Astrocyte of the cerebellum (primary cell): ENCODE measurements at regions of chr15 and their contacts with region 1.

Region 1: DNA sequence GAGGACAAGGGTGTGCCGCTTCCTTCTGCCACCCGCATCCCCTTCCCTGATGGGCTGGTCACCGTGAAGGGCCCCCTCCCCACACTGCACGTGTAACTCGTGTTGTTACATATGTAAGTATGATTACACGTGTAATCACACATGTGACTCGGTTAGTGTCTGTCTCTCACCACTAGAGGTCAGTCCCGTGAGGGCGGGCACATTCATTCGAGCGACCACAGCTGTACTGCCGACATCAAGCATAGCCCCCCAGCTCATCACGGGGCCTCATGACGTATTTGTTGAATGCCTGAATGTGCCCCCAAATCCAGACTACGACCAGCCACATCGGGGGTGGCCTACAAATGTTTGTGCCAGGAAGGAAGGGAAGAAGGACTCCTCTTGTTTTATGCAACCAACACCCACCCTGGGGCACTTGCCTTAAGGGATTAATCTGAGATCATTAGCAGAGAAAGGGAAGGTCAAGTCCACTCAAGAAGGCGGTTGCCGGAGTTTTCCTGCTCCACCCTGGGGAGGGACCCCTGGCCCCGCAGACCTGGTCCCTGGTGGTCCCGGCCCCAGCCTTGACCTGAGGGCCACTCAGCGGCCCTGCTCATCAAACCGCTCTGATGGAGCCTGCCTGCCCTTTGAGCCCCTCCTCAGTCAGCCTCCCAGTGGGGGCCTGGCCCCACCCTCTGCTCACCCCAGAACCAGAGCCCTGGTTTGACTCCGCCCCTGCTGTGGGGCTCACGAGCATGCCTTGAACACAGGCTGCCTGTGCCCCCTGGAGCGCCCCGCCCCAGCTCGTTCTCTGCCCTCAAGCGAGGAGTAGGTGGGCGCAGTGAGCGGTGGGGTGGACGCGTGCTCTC is 52.8 kb downstream of the RGMA start:
- DNase-seq: no peak
- H3K4me3 ChIP-seq: no peak overlapping the region
- CTCF ChIP-seq: peak; percentile 61

Region 2: GRCh38 chr15:92989470-92989869 is 46.7 kb before region 1 on chr15:
- in situ Hi-C with region 1: no loop called
- DNase-seq: no peak
- H3K4me3 ChIP-seq: no peak overlapping the region
- CTCF ChIP-seq: no peak

Region 3: DNA sequence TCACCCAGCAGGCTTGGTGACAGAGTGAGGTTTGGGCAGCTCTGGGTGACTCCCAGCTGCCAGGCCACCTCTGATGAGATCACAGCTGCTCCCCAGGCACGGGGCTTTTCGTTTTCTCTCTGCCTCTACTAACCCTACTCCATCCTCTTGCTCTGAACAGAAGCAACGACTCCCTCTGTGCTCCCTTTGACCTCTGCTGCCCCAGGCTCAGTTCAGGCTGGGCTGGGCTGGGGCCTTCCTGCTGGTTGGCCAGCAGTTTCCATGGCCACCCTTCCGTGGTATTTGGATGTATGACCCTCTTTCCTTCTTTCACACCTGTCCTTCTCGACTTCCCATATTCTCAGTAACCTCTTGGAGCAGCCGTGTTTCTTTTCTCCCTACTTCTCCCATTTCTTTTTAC is 44.3 kb after region 1 on chr15:
- in situ Hi-C with region 1: loop called (anchors 5 kb)
- DNase-seq: no peak
- H3K4me3 ChIP-seq: no peak overlapping the region
- CTCF ChIP-seq: no peak

Region 4: DNA sequence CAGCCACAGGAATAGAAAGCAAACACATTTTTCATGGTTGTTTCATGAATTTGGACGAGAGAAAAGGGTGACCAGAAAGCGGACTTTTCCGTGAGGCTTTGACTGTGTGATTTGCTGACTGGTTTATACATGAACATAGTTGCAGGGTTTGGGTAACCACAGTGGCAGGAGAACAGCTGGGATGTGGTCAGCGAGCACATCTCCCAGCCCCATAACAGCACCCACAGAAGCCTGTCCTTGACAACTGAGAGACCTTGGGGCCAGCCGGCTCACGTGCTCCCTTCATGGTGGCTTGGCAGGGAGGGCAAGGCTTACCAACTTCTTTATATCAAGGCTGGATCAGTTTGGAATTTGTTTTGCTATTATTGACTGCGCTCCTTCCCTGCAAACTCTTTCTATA is 66.0 kb after region 1 on chr15:
- in situ Hi-C with region 1: no loop called
- DNase-seq: no peak
- H3K4me3 ChIP-seq: no peak overlapping the region
- CTCF ChIP-seq: no peak